ENCODE measurements at regions of chr22 and their contacts with region 1.

Region 1: GRCh38 chr22:46576556-46577367 is 39.3 kb upstream of the CELSR1 start:
- DNase-seq: peak; percentile 50 to 83 (median 75)
- ATAC-seq: peak in 2 of 4 donors; percentile 21 to 23
- H3K4me3 ChIP-seq: peak overlapping the region; percentile 64 to 89 (median 80)
- H3K27ac ChIP-seq: peak overlapping the region; percentile 69 to 96 (median 87)
- H3K4me1 ChIP-seq: peaks cover 24 to 79% (median 63%) of the 10 kb centered on the region in 12 donors
- H3K27me3 ChIP-seq: no peaks in the 10 kb centered on the region
- CTCF ChIP-seq: no peak
- POLR2A ChIP-seq: no peak

Region 2: GRCh38 chr22:46547883-46548244 is 28.9 kb before region 1 on chr22:
- intact Hi-C with region 1: loop called in 1 of 10 experiments (anchors 2 kb)
- DNase-seq: peak in 4 of 5 donors; percentile 77 to 91 (median 84)
- ATAC-seq: peak; percentile 37 to 72 (median 64)
- H3K4me3 ChIP-seq: peak overlapping the region in 6 of 12 donors; percentile 5 to 24 (median 11)
- H3K27ac ChIP-seq: peak overlapping the region; percentile 81 to 98 (median 93)
- H3K4me1 ChIP-seq: peaks cover 0 to 53% (median 28%) of the 10 kb centered on the region in 12 donors
- H3K27me3 ChIP-seq: peaks cover 0 to under 1% (median 0%) of the 10 kb centered on the region in 9 donors
- CTCF ChIP-seq: no peak
- POLR2A ChIP-seq: peak in 1 of 2 donors; percentile 11

Region 3: GRCh38 chr22:46649141-46650077 is 72.6 kb after region 1 on chr22:
- intact Hi-C with region 1: loop called in 4 of 10 experiments (anchors 2 to 5 kb)
- DNase-seq: peak in 4 of 5 donors; percentile 66 to 88 (median 74)
- ATAC-seq: peak; percentile 69 to 79 (median 76)
- H3K4me3 ChIP-seq: no peak overlapping the region
- H3K27ac ChIP-seq: peak overlapping the region; percentile 75 to 98 (median 90)
- H3K4me1 ChIP-seq: peaks cover 24 to 92% (median 72%) of the 10 kb centered on the region in 12 donors
- H3K27me3 ChIP-seq: no peaks in the 10 kb centered on the region
- CTCF ChIP-seq: no peak
- POLR2A ChIP-seq: no peak

Region 4: GRCh38 chr22:46674367-46674781 is 97.6 kb after region 1 on chr22:
- intact Hi-C with region 1: loop called in 2 of 10 experiments (anchors 5 kb)
- DNase-seq: peak; percentile 73 to 87 (median 84)
- ATAC-seq: peak; percentile 13 to 84 (median 34)
- H3K4me3 ChIP-seq: peak overlapping the region in 10 of 12 donors; percentile 22 to 61 (median 44)
- H3K27ac ChIP-seq: peak overlapping the region; percentile 15 to 86 (median 69)
- H3K4me1 ChIP-seq: peaks cover 0 to 47% (median 16%) of the 10 kb centered on the region in 12 donors
- H3K27me3 ChIP-seq: no peaks in the 10 kb centered on the region
- CTCF ChIP-seq: no peak
- POLR2A ChIP-seq: no peak

Region 5: GRCh38 chr22:46762238-46763050 is 185.7 kb after region 1 on chr22 and contains the start of gene TBC1D22A:
- intact Hi-C with region 1: loop called in 1 of 10 experiments (anchors 10 kb)
- DNase-seq: peak; percentile 93 to 98 (median 95)
- ATAC-seq: peak; percentile 94 to 96 (median 95)
- H3K4me3 ChIP-seq: peak within 1 kb of the TSS; percentile 70 to 99 (median 88)
- H3K27ac ChIP-seq: peak within 1 kb of the TSS; percentile 85 to 99 (median 94)
- H3K4me1 ChIP-seq: peaks cover 0 to 60% (median 36%) of the 10 kb centered on the region in 12 donors
- H3K27me3 ChIP-seq: no peaks in the 10 kb centered on the region
- CTCF ChIP-seq: peak in 3 of 12 donors; percentile 7 to 9 (median 7)
- POLR2A ChIP-seq: peak; percentile 85 to 98
- total RNA-seq, gene TBC1D22A: 14.0 to 30.7 (median 18.6) TPM

Measured in heart left ventricle (tissue), 16 donors.